Heart left ventricle (tissue), 16 donors: ENCODE measurements at regions of chr22 and their contacts with region 1.

Region 1: GRCh38 chr22:40376149-40376548 is 5.8 kb downstream of the SGSM3 start:
- DNase-seq: no peak
- ATAC-seq: no peak
- H3K4me3 ChIP-seq: no peak overlapping the region
- H3K27ac ChIP-seq: no peak overlapping the region
- H3K4me1 ChIP-seq: peaks cover 0 to 21% (median 7%) of the 10 kb centered on the region in 12 donors
- H3K27me3 ChIP-seq: no peaks in the 10 kb centered on the region
- CTCF ChIP-seq: no peak
- POLR2A ChIP-seq: no peak

Region 2: DNA sequence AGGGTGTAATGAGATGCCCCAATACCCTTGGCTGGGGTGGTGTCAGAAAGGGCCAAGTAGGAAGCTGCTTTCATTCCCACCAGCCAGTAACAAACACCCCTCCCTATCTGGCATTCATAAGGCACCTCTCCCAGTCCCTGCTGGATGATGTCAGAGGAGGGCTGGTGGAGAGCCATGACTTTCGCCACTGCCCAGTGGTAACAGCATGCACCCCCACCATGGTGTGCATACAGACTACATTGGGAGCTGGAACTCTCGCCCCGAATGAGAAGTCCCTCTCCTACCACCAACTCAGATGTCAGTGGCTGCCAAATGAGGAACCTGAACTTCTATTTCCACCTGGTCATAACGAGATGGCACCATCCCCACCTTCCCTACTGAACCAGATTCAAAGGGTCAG is 67.6 kb after region 1 on chr22:
- intact Hi-C with region 1: no loop called
- DNase-seq: peak in 1 of 5 donors; percentile 45
- ATAC-seq: peak; percentile 35 to 89 (median 64)
- H3K4me3 ChIP-seq: no peak overlapping the region
- H3K27ac ChIP-seq: peak overlapping the region in 1 of 12 donors; percentile 66
- H3K4me1 ChIP-seq: peaks cover 0 to 89% (median 13%) of the 10 kb centered on the region in 12 donors
- H3K27me3 ChIP-seq: no peaks in the 10 kb centered on the region
- CTCF ChIP-seq: no peak
- POLR2A ChIP-seq: no peak

Region 3: GRCh38 chr22:40487663-40488249 is 111.6 kb after region 1 on chr22:
- intact Hi-C with region 1: loop called in 1 of 10 experiments (anchors 10 kb)
- DNase-seq: no peak
- ATAC-seq: no peak
- H3K4me3 ChIP-seq: no peak overlapping the region
- H3K27ac ChIP-seq: no peak overlapping the region
- H3K4me1 ChIP-seq: peaks cover 0 to 62% (median 40%) of the 10 kb centered on the region in 12 donors
- H3K27me3 ChIP-seq: no peaks in the 10 kb centered on the region
- CTCF ChIP-seq: peak; percentile 37 to 77 (median 62)
- POLR2A ChIP-seq: no peak